Right cardiac atrium (tissue), 5 donors: ENCODE measurements at regions of chr5 and their contacts with region 1.

Region 1: DNA sequence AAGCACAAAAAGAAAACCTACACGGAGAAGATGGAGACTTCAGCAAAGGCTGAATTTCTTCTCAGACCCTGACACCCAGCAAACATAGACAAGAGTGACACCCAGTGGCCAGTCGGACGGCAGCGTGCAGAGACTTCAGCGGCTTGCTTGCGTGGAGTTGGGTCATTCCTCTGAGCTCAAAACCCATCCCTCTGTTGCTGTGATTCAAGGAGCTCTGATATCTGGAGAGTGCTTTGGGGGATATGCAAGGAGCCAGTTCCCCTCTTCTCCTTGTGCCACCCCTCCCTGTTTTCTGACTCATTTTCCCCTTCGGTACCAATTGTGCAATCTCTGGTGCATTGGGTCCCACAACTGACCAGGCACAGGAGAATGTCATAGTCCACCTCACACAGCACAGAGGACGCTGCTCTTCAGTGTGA is 27.5 kb downstream of the SH3TC2 start:
- DNase-seq: peak; percentile 72 to 89 (median 84)
- ATAC-seq: peak; percentile 89 to 90
- H3K4me3 ChIP-seq: no peak overlapping the region
- H3K27ac ChIP-seq: no peak overlapping the region
- H3K4me1 ChIP-seq: no peaks in the 10 kb centered on the region
- H3K27me3 ChIP-seq: no peaks in the 10 kb centered on the region

Region 2: GRCh38 chr5:148443998-148444397 is 591.4 kb before region 1 on chr5:
- intact Hi-C with region 1: loop called in 1 of 4 experiments (anchors 10 kb)
- DNase-seq: no peak
- ATAC-seq: peak; percentile 77 to 84
- H3K4me3 ChIP-seq: no peak overlapping the region
- H3K27ac ChIP-seq: no peak overlapping the region
- H3K4me1 ChIP-seq: peaks cover 2% of the 10 kb centered on the region
- H3K27me3 ChIP-seq: no peaks in the 10 kb centered on the region

Region 3: GRCh38 chr5:149108651-149109280 is 73.4 kb after region 1 on chr5:
- intact Hi-C with region 1: loop called in 2 of 4 experiments (anchors 10 kb)
- DNase-seq: no peak
- ATAC-seq: no peak
- H3K4me3 ChIP-seq: no peak overlapping the region
- H3K27ac ChIP-seq: no peak overlapping the region
- H3K4me1 ChIP-seq: peaks cover 3% of the 10 kb centered on the region
- H3K27me3 ChIP-seq: no peaks in the 10 kb centered on the region

Region 4: DNA sequence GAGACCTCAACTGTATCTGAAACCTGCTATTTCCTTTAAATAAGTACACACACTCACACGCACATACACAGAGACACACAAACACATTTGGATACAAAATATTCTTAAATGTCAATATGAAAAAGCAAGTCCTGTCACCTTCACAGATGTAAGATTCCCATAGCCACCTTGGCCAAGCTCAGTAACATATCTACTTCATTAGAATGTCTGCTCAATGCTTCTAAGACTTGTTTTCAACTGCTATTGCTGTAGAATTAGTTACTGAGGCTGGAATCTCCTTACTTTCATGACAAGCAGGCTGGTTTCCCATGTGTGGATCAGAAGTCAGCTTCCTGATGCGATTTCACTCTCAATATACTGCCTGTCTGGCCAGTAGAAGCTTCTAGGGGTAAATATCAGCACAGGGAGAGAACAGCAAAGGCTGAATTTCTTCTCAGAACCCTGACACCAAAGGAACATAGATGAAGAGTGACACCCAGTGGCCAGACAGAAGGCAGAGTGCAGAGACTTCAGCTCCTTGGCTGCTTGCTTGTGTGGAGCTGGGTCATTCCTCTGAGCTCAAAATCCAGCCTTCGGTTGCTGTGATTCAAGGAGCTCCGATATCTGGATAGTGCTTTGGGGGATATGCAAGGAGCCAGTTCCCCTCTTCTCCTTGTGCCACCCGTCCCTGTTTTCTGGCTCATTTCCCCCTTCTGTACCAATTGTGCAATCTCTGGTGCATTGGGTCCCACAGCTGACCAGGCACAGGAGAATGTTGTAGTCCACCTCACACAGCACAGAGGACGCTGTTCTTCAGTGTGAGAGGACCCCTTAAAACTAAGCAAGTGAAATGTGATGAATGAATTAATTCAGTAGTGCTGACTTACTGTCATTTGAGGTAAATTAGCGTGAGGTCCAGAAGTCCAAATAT is 79.3 kb after region 1 on chr5:
- intact Hi-C with region 1: loop called in 2 of 4 experiments (anchors 10 kb)
- DNase-seq: peak; percentile 42 to 69 (median 66)
- ATAC-seq: peak; percentile 97
- H3K4me3 ChIP-seq: no peak overlapping the region
- H3K27ac ChIP-seq: no peak overlapping the region
- H3K4me1 ChIP-seq: peaks cover 3% of the 10 kb centered on the region
- H3K27me3 ChIP-seq: no peaks in the 10 kb centered on the region

Region 5: DNA sequence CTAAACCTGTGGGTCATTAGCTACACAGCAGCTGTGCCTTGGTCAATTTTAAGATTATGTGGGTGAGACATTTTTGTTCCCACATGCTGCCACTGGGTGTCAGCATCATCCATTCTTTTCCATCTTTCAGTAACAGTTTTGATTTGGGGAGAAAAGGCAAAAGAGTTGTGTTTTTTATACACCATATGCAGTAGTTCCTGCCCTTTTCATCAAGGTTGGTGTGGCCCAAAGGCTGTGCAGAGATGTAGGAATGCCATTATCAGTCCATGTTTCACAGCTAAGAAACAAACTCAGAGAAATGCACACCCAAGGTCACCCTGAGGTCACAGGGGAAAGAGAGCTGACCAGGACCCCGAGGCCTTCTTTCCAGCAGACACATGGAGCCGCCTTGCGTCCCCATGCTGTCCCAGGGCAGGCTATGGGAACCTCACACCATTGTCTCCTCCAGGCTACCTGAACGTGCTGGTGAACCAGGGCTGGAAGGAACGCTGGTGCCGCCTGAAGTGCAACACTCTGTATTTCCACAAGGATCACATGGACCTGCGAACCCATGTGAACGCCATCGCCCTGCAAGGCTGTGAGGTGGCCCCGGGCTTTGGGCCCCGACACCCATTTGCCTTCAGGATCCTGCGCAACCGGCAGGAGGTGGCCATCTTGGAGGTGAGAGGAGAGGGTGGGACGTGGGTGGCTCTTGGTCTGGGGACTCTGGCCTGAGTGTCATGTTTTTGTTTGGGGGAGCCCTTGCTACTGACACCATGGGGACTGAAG is 282.1 kb after region 1 on chr5:
- intact Hi-C with region 1: no loop called
- DNase-seq: no peak
- ATAC-seq: no peak
- H3K4me3 ChIP-seq: no peak overlapping the region
- H3K27ac ChIP-seq: peak overlapping the region; percentile 15
- H3K4me1 ChIP-seq: peaks cover 5% of the 10 kb centered on the region
- H3K27me3 ChIP-seq: no peaks in the 10 kb centered on the region